Calu3 (cell line): ENCODE measurements at regions of chr13 and their contacts with region 1.

Region 1: GRCh38 chr13:106536244-106537034 is 977 bp upstream of the EFNB2 start:
- DNase-seq: peak; percentile 67
- H3K4me3 Mint-ChIP-seq: peak overlapping the region; percentile 79
- H3K27ac Mint-ChIP-seq: peak overlapping the region; percentile 73
- H3K4me1 Mint-ChIP-seq: no peaks in the 10 kb centered on the region
- H3K27me3 Mint-ChIP-seq: no peaks in the 10 kb centered on the region
- CTCF ChIP-seq: peak; percentile 31

Region 2: GRCh38 chr13:106083620-106084350 is 452.7 kb before region 1 on chr13:
- CTCF ChIA-PET with region 1: interaction called, 4 read pairs
- intact Hi-C with region 1: loop called (anchors 5 kb)
- DNase-seq: peak; percentile 34
- H3K4me3 Mint-ChIP-seq: no peak overlapping the region
- H3K27ac Mint-ChIP-seq: no peak overlapping the region
- H3K4me1 Mint-ChIP-seq: no peaks in the 10 kb centered on the region
- H3K27me3 Mint-ChIP-seq: no peaks in the 10 kb centered on the region
- CTCF ChIP-seq: no peak

Region 3: GRCh38 chr13:106567474-106568298 is 31.2 kb after region 1 on chr13 and contains the start of gene ARGLU1:
- CTCF ChIA-PET with region 1: no interaction called
- intact Hi-C with region 1: no loop called
- DNase-seq: peak; percentile 80
- H3K4me3 Mint-ChIP-seq: peak within 1 kb of the TSS; percentile 91
- H3K27ac Mint-ChIP-seq: peak within 1 kb of the TSS; percentile 77
- H3K4me1 Mint-ChIP-seq: peaks cover 13% of the 10 kb centered on the region
- H3K27me3 Mint-ChIP-seq: no peaks in the 10 kb centered on the region
- CTCF ChIP-seq: no peak
- total RNA-seq, gene ARGLU1: 28.8 and 34.0 TPM in 2 replicates